CD4-positive, alpha-beta memory T cell (primary cell): ENCODE measurements at regions of chr2 and their contacts with region 1.

Region 1: DNA sequence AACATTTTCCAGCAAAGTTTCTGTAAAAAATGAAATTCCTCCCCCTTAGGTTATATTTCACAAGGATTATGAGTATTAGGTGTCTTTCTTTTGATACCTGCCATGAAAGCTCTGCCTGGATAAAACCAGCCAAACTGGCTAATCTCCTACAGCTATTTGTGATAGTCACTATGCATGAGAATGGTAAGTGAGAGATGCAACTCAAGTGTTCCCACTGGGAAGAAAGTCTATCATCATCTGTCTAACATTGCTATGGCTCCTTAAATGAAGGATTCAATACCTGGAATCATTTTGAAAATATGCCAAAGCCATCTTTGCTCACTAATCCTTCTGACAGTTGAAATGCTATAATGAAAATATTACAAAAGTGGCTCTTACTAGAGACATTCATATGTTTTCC is 339.9 kb upstream of the LRRTM4 start:
- DNase-seq: no peak
- H3K4me3 ChIP-seq: no peak overlapping the region
- H3K4me3 Mint-ChIP-seq: no peak overlapping the region
- H3K27ac ChIP-seq: no peak overlapping the region
- H3K27ac Mint-ChIP-seq: no peak overlapping the region
- H3K4me1 ChIP-seq: no peaks in the 10 kb centered on the region
- H3K4me1 Mint-ChIP-seq: no peaks in the 10 kb centered on the region
- H3K27me3 ChIP-seq: no peaks in the 10 kb centered on the region
- H3K27me3 Mint-ChIP-seq: no peaks in the 10 kb centered on the region

Region 2: GRCh38 chr2:77552956-77553355 is 309.2 kb before region 1 on chr2:
- CTCF ChIA-PET with region 1: no interaction called
- POLR2A ChIA-PET with region 1: no interaction called
- intact Hi-C with region 1: no loop called
- DNase-seq: no peak
- H3K4me3 ChIP-seq: no peak overlapping the region
- H3K4me3 Mint-ChIP-seq: no peak overlapping the region
- H3K27ac ChIP-seq: no peak overlapping the region
- H3K27ac Mint-ChIP-seq: no peak overlapping the region
- H3K4me1 ChIP-seq: no peaks in the 10 kb centered on the region
- H3K4me1 Mint-ChIP-seq: no peaks in the 10 kb centered on the region
- H3K27me3 ChIP-seq: no peaks in the 10 kb centered on the region
- H3K27me3 Mint-ChIP-seq: no peaks in the 10 kb centered on the region

Region 3: DNA sequence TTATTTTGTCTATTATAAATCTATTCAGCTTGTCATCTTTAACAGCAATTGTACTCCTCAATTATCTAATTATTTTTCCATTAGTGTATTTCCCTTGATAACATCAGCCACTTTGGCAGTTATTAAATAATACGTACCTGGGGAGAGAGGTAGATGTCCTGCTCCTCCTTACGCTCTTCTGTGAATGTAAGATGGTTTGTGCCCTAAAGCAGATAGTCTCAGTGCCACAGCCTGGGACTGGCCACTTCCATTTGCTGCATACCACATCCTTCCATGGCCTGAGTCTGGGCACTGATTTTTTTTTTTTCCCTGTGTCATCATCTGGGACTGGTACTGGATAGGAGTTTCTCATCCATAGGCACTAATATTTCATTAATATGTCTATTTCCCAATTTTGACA is 292.5 kb after region 1 on chr2:
- CTCF ChIA-PET with region 1: no interaction called
- POLR2A ChIA-PET with region 1: no interaction called
- intact Hi-C with region 1: no loop called
- DNase-seq: no peak
- H3K4me3 ChIP-seq: no peak overlapping the region
- H3K4me3 Mint-ChIP-seq: no peak overlapping the region
- H3K27ac ChIP-seq: no peak overlapping the region
- H3K27ac Mint-ChIP-seq: no peak overlapping the region
- H3K4me1 ChIP-seq: no peaks in the 10 kb centered on the region
- H3K4me1 Mint-ChIP-seq: no peaks in the 10 kb centered on the region
- H3K27me3 ChIP-seq: no peaks in the 10 kb centered on the region
- H3K27me3 Mint-ChIP-seq: no peaks in the 10 kb centered on the region

Region 4: GRCh38 chr2:78465707-78466106 is 603.6 kb after region 1 on chr2:
- CTCF ChIA-PET with region 1: no interaction called
- POLR2A ChIA-PET with region 1: no interaction called
- intact Hi-C with region 1: loop called (anchors 5 kb)
- DNase-seq: no peak
- H3K4me3 ChIP-seq: no peak overlapping the region
- H3K4me3 Mint-ChIP-seq: no peak overlapping the region
- H3K27ac ChIP-seq: no peak overlapping the region
- H3K27ac Mint-ChIP-seq: no peak overlapping the region
- H3K4me1 ChIP-seq: no peaks in the 10 kb centered on the region
- H3K4me1 Mint-ChIP-seq: no peaks in the 10 kb centered on the region
- H3K27me3 ChIP-seq: no peaks in the 10 kb centered on the region
- H3K27me3 Mint-ChIP-seq: no peaks in the 10 kb centered on the region